AG04450 (cell line): ENCODE measurements at regions of chr4 and their contacts with region 1.

Region 1: DNA sequence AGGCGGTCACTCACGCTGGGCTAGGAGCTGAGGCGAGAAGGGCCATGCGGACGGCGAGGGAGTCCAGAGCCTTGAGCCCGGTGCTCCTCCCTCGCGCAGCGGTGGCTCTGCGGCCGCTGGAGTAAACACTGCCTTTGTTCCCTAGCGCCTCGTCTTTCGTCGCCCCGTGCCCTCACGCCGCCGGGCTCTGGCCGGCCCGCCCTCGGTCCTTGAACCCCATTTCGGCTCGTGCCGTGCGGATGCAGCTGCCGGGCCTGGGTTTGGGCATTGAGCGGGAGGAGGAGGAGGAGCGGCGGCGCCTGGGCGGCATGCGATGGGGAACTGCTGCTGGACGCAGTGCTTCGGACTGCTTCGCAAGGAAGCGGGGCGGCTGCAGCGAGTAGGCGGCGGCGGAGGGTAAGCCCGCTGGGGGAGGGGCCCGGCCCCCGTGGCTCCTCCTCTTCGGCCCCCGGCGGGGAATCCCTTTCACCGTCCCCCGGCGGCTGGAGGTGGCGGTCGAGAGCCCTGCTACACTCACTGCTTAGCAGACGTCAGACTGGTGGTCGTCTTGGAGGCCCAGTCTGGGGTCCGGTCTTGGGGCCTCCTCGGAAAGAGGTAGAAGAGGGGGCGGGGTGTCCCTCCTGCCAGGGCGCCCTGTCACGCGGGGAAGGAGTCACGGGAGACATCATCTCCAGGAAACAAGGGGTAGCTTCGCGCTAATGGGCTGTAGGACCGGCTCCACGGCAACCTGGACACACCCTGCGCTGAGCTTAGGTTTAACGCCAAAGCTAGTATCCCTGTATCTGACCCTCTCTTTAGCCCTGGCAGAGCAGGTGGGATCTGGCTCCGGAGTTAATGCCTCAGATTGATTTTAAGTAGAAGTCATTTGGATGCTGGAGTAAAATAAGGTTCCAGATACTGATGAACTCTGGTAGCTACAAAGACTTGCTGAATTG is at the start of gene AP1AR:
- DNase-seq: no peak
- H3K4me3 ChIP-seq: peak within 1 kb of the TSS; percentile 87
- H3K27ac ChIP-seq: peak within 1 kb of the TSS; percentile 94
- H3K27me3 ChIP-seq: no peaks in the 10 kb centered on the region
- CTCF ChIP-seq: peak; percentile 50
- polyA plus RNA-seq, gene AP1AR: 7.6 and 11.8 TPM in 2 replicates

Region 2: GRCh38 chr4:112214390-112215264 is 17.4 kb before region 1 on chr4:
- CTCF ChIA-PET with region 1: interaction called, 16 read pairs
- POLR2A ChIA-PET with region 1: interaction called, 4 read pairs
- DNase-seq: no peak
- H3K4me3 ChIP-seq: no peak overlapping the region
- H3K27ac ChIP-seq: no peak overlapping the region
- H3K27me3 ChIP-seq: no peaks in the 10 kb centered on the region
- CTCF ChIP-seq: peak; percentile 43

Region 3: GRCh38 chr4:112245383-112245782 is 13.3 kb after region 1 on chr4:
- CTCF ChIA-PET with region 1: interaction called, 26 read pairs
- POLR2A ChIA-PET with region 1: no interaction called
- DNase-seq: no peak
- H3K4me3 ChIP-seq: no peak overlapping the region
- H3K27ac ChIP-seq: no peak overlapping the region
- H3K27me3 ChIP-seq: no peaks in the 10 kb centered on the region
- CTCF ChIP-seq: peak; percentile 38